Cardiac septum (tissue), 1 donor: ENCODE measurements at regions of chr20 and their contacts with region 1.

Region 1: DNA sequence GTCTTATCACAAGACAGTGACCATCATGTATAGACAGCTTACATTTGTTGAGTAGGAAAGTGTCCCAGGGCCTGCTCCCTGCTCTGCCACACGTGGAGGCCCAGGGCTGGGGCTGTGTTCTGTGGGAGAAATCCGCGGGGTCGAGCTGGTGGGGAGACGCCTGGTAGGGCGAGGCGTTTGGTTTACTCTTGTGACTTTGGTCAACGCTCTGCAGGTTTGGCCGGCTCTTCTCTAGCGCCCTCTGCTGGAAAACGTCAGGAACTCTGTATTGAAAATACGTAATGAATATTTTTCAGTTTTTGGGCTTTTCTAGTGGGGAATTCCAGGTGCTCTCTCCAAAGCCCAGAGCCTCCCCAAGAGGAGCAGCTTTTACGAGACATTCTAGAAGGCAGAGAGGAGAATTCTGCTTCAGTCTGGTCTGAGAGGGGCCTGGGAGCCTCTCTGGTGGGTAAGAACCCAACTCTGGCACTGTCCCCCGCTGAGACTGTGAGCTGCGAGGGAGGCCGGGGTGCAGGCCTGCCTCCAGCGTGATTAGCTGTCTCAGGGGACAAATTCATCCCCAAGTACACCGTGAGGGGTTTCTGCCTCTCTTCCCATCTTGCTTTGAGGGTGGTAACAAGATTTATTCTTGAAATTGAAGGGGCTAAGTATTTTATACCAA is 112.6 kb upstream of the RALGAPA2 start:
- DNase-seq: peak; percentile 84

Region 2: DNA sequence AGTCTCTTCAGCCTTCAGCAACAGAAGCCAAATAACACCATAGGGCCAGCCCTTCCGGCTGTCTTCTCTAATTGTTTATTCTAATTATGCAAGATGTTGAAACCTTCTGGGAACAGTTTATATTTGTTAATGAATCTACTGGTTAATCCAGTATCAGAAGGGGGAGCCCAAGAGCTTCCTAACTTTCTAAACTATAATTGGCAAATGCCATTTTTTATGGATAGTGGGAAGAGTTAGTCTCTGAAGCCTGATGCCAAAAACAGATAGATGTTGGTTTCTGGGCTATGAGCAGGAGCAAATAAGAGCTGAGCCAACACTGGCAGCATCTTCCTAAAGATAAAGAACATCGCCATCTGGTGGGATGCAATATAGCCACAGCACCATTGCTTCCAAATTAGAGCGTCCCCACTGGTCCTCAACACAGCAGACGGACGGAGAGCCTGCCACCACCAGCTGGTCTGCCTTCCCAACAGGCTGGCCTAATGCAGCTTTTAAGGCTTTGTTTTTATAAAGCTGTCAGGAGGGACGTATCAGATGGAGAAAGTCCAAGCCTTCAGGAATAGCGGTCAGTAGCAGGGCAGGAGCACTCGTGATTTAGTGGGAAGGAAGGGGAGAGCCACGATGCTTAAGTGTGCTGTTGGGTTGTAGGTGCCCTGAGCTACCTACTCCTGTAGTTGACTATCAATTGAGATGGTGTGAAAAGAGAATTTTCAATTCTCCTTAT is 231.4 kb before region 1 on chr20:
- intact Hi-C with region 1: loop called (anchors 10 kb)
- DNase-seq: no peak

Region 3: GRCh38 chr20:20664795-20665589 is 160.1 kb before region 1 on chr20:
- intact Hi-C with region 1: loop called (anchors 2 kb)
- DNase-seq: no peak